PC-3 (cell line): ENCODE measurements at regions of chr1 and their contacts with region 1.

Region 1: DNA sequence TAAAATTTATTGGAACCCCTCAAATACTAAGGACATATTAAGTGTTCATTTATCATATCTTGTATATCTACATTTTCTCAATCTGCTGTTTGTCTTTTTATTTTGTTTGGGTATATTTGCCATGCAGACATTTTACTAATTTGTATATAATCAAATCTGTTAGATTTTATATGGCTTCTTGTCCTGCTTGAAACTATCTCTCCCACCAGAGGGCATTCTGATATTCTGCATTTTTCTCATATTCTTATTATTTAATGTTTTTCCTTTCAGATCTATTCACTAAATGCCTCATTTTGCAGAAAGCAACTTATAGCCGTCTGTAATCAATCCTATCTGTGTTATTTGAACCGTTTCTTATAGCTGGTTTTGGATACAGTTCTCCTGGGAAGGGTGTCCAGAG is 745.5 kb downstream of the LRRIQ3 start:
- DNase-seq: peak; percentile 7
- ATAC-seq: no peak
- H3K4me3 ChIP-seq: no peak overlapping the region
- H3K27ac ChIP-seq: no peak overlapping the region
- H3K4me1 ChIP-seq: no peaks in the 10 kb centered on the region
- H3K27me3 ChIP-seq: no peaks in the 10 kb centered on the region; the same call in 1 of the 2 replicates
- CTCF ChIP-seq: peak; percentile 60

Region 2: GRCh38 chr1:73491634-73492033 is 39.1 kb after region 1 on chr1:
- CTCF ChIA-PET with region 1: no interaction called
- POLR2A ChIA-PET with region 1: no interaction called
- intact Hi-C with region 1: no loop called
- DNase-seq: no peak
- ATAC-seq: no peak
- H3K4me3 ChIP-seq: no peak overlapping the region
- H3K27ac ChIP-seq: no peak overlapping the region
- H3K4me1 ChIP-seq: no peaks in the 10 kb centered on the region
- H3K27me3 ChIP-seq: 0 out of 2 replicates have a peak, but pooled peaks cover 5% of the 10 kb centered on the region
- CTCF ChIP-seq: no peak

Region 3: GRCh38 chr1:73635021-73635420 is 182.5 kb after region 1 on chr1:
- CTCF ChIA-PET with region 1: no interaction called
- POLR2A ChIA-PET with region 1: no interaction called
- intact Hi-C with region 1: loop called (anchors 1 kb)
- DNase-seq: peak; percentile 26
- ATAC-seq: peak; percentile 57
- H3K4me3 ChIP-seq: no peak overlapping the region
- H3K27ac ChIP-seq: no peak overlapping the region
- H3K4me1 ChIP-seq: no peaks in the 10 kb centered on the region
- H3K27me3 ChIP-seq: peaks cover 10% of the 10 kb centered on the region; the same call in 1 of the 2 replicates
- CTCF ChIP-seq: peak; percentile 42; the same call in 1 of the 2 replicates

Region 4: GRCh38 chr1:73674945-73675561 is 222.5 kb after region 1 on chr1:
- CTCF ChIA-PET with region 1: no interaction called
- POLR2A ChIA-PET with region 1: no interaction called
- intact Hi-C with region 1: loop called (anchors 1 kb)
- DNase-seq: peak; percentile 20
- ATAC-seq: peak; percentile 76
- H3K4me3 ChIP-seq: no peak overlapping the region
- H3K27ac ChIP-seq: no peak overlapping the region
- H3K4me1 ChIP-seq: no peaks in the 10 kb centered on the region
- H3K27me3 ChIP-seq: no peaks in the 10 kb centered on the region
- CTCF ChIP-seq: peak; percentile 72

Region 5: GRCh38 chr1:74343216-74343615 is 890.7 kb after region 1 on chr1:
- CTCF ChIA-PET with region 1: no interaction called
- POLR2A ChIA-PET with region 1: no interaction called
- intact Hi-C with region 1: no loop called
- DNase-seq: no peak
- ATAC-seq: no peak
- H3K4me3 ChIP-seq: no peak overlapping the region
- H3K27ac ChIP-seq: no peak overlapping the region
- H3K4me1 ChIP-seq: no peaks in the 10 kb centered on the region
- H3K27me3 ChIP-seq: no peaks in the 10 kb centered on the region
- CTCF ChIP-seq: no peak